A673 (cell line): ENCODE measurements at regions of chr5 and their contacts with region 1.

Region 1: GRCh38 chr5:41243558-41243957 is 30.2 kb upstream of the C6 start:
- DNase-seq: no peak
- H3K4me3 ChIP-seq: no peak overlapping the region
- H3K27ac ChIP-seq: no peak overlapping the region
- H3K4me1 ChIP-seq: no peaks in the 10 kb centered on the region
- H3K27me3 ChIP-seq: no peaks in the 10 kb centered on the region
- CTCF ChIP-seq: no peak

Region 2: GRCh38 chr5:41264019-41264418 is 20.5 kb after region 1 on chr5:
- CTCF ChIA-PET with region 1: no interaction called
- POLR2A ChIA-PET with region 1: no interaction called
- intact Hi-C with region 1: loop called (anchors 2 kb)
- DNase-seq: peak; percentile 79
- H3K4me3 ChIP-seq: no peak overlapping the region
- H3K27ac ChIP-seq: peak overlapping the region; percentile 32
- H3K4me1 ChIP-seq: peaks cover 43% of the 10 kb centered on the region
- H3K27me3 ChIP-seq: no peaks in the 10 kb centered on the region
- CTCF ChIP-seq: no peak